GM12878 (cell line): ENCODE measurements at regions of chr3 and their contacts with region 1.

Region 1: DNA sequence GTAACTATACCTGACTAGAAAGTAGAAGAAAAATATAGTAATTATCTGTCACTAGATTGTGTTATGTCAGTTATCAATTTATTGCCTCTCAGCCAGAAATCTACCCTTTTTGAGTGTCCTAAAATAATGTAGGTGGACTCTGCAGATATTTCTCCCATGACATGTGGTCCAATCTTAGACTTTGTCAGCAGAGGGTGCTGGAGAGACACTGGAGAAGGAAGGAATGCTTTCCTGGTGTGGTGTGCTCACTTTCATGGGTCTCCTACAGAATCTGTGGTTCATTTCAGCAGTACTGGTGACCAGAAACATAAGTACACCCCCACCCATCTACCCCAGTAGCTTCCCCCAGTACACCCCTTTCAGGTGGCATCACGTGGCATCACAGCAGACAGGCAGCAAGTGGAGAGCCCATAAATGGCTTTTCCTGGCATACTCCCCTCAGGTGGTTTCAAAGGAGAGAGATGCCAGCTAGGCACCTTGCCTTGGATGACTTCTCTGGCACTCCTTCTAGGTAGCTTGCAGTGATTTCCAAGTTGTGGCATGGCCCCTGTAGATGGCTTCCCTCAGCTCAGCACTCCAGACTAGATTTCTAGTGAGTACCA is 114.7 kb downstream of the GADL1 start:
- DNase-seq: no peak
- ATAC-seq: peak; percentile 55; the same call in 2 of the 3 replicates
- H3K4me3 ChIP-seq: no peak overlapping the region
- H3K27ac ChIP-seq: no peak overlapping the region
- H3K4me1 ChIP-seq: no peaks in the 10 kb centered on the region
- H3K27me3 ChIP-seq: no peaks in the 10 kb centered on the region; a peak in 1 of 4 replicates
- CTCF ChIP-seq: peak; percentile 53 to 57 (median 53); a peak in 5 of 6 replicates
- EP300 ChIP-seq: no peak
- POLR2A ChIP-seq: no peak
- RAD21 ChIP-seq: peak; percentile 54

Region 2: GRCh38 chr3:31448035-31448881 is 668.5 kb after region 1 on chr3:
- CTCF ChIA-PET with region 1: no interaction called
- POLR2A ChIA-PET with region 1: no interaction called
- RAD21 ChIA-PET with region 1: no interaction called
- SMC1A ChIA-PET with region 1: no interaction called
- in situ Hi-C with region 1: no loop called
- intact Hi-C with region 1: loop called (anchors 10 kb)
- DNase-seq: no peak
- ATAC-seq: peak; percentile 96
- H3K4me3 ChIP-seq: 0 out of 2 replicates have a peak overlapping the region, but pooled peaks have one; percentile 42
- H3K27ac ChIP-seq: peak overlapping the region; percentile 79
- H3K4me1 ChIP-seq: peaks cover 34% of the 10 kb centered on the region
- H3K27me3 ChIP-seq: no peaks in the 10 kb centered on the region
- CTCF ChIP-seq: peak; percentile 43 to 73 (median 67)
- EP300 ChIP-seq: no peak
- POLR2A ChIP-seq: no peak
- RAD21 ChIP-seq: peak; percentile 71